ENCODE measurements at regions of chr7 and their contacts with region 1.

Region 1: GRCh38 chr7:150778738-150779301 is 21.3 kb downstream of the TMEM176B start:
- DNase-seq: peak; percentile 90
- ATAC-seq: peak; percentile 90

Region 2: GRCh38 chr7:150570556-150571465 is 208.0 kb before region 1 on chr7:
- intact Hi-C with region 1: no loop called
- DNase-seq: no peak
- ATAC-seq: no peak

Region 3: GRCh38 chr7:150675714-150676113 is 103.1 kb before region 1 on chr7:
- intact Hi-C with region 1: no loop called
- DNase-seq: no peak
- ATAC-seq: no peak

Region 4: DNA sequence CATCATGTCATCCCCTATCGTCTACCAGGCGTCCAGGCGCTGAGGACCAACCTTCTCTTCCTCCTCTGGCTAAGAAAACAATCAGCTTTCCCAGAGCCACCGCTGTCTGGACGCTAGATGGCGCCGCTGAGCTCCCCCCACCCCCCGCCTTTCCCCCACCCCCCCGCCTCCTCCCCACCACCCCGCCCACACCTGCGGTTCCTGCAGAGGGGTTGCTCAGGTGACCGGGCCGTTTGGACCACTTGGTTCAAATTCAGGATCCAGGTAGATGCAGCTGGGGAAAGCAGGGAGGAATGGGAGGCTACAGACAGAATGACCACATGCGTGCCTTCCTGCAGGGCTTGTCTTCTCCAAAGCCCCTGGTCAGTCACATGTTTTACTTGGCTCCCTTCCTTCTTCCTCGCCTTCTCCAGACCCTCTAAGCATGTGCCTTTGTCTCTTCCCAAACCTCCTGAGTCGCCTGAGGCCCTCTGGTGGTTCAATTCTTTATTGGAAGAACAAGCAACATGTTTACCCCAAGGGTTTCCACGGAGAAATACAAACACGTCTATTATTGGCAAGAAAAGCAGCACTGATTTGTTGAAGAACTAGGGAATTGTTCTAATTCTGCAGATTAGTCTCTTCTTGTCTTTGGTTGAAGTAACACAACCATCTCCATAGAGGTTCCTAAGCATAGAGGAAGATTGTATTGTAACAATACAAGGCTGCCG is 98.2 kb after region 1 on chr7:
- intact Hi-C with region 1: loop called (anchors 2 kb)
- DNase-seq: peak; percentile 68
- ATAC-seq: peak; percentile 94

Measured in left ventricle myocardium superior (tissue), 1 donor.